Calu3 (cell line): ENCODE measurements at regions of chr12 and their contacts with region 1.

Region 1: DNA sequence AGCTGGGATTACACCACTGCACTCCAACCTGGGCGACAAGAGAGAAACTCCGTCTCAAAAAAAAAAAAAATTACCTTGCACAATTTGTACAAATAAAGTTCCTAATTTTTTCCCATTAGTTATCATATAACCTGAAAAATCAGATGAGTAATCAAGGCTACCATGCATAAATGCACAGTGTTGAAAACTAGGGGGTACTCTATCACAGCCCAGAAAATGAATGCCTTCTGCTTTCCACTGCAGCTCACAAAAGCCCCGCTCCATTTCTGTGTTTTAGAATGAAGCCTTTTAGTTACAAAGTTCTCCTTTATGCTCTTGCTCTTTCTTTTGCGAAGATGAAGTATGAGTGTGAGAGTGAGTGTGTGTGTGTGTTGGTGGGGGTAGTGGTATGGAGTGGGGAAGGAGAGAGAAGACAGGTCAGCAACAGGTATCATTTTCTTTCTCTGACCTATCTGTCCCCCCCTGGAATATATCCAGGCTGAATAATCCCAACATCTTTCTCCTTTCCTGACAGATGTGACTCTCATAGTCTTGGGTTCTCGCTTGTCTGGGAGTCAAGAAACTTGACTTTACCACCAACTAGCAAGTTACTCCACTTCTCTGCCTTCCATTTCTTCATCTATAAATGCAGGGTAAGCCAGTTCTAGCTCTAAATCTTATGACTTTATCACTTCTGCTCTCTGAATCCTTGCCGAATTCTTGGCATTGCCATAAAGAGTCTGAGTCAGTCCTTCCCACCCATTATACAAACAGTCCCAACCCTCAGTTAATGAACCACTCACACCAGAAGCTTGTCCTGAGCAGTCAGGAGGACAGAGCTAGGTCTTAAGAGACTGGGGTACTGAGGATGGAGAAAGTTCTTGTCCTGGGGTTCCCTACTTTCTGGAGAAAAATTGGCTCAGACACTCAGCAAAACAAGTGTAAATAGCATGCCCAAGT is 16.1 kb downstream of the BIN2 start:
- DNase-seq: peak; percentile 50
- H3K4me3 Mint-ChIP-seq: peak overlapping the region; percentile 44
- H3K27ac Mint-ChIP-seq: peak overlapping the region; percentile 97
- H3K4me1 Mint-ChIP-seq: peaks cover 16% of the 10 kb centered on the region
- H3K27me3 Mint-ChIP-seq: no peaks in the 10 kb centered on the region
- CTCF ChIP-seq: no peak

Region 2: GRCh38 chr12:51009056-51009440 is 298.9 kb before region 1 on chr12:
- CTCF ChIA-PET with region 1: no interaction called
- intact Hi-C with region 1: no loop called
- DNase-seq: no peak
- H3K4me3 Mint-ChIP-seq: no peak overlapping the region
- H3K27ac Mint-ChIP-seq: no peak overlapping the region
- H3K4me1 Mint-ChIP-seq: peaks cover 13% of the 10 kb centered on the region
- H3K27me3 Mint-ChIP-seq: no peaks in the 10 kb centered on the region
- CTCF ChIP-seq: no peak

Region 3: DNA sequence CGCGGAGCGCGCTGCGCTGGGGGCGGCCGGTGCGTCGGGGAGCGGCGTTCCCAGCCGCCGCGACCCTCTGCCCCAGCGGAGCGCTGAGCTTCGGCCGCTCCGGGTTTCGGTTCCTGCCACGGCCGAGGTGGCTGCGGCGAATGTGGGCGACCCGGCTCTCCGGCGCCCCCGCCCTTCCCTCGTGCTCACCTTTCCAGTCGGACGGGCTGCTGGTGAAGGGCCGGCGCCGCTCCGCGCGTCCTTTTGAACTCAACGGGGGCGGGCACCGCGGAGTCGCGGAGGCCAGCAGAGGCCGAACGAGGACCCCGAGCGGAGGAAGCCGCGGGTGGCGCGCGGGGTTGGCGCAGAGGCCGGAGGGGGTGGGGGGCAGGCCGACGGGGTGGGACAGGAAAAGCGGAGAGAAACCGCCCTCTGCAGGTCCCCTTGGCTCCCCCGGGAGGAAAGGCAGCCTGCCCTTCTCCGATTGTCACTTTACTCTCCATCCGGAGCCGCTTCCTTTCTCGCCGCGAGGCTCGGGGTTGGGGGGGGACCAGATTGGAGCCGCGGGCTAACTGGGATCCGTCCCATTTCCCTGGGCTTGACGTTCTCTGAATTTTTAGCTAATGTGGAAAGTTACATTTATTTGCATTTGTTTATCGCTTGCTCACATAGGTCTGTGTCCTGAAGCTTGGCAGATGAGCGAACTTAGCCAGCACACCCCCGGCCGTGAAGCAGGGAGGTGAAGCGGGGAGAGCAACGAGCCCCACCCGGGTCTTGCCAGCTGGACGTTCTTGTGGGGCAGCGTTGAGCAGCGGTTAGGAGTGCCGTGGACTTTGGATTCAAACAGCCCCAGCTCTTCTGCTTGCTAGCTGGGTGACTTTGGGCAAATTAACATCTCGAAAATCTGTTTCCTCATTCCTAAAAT is 37.6 kb before region 1 on chr12 and contains the start of gene SMAGP:
- CTCF ChIA-PET with region 1: interaction called, 11 read pairs
- intact Hi-C with region 1: loop called (anchors 5 kb)
- DNase-seq: peak; percentile 90
- H3K4me3 Mint-ChIP-seq: peak within 1 kb of the TSS; percentile 83
- H3K27ac Mint-ChIP-seq: peak within 1 kb of the TSS; percentile 95
- H3K4me1 Mint-ChIP-seq: peaks cover 24% of the 10 kb centered on the region
- H3K27me3 Mint-ChIP-seq: no peaks in the 10 kb centered on the region
- CTCF ChIP-seq: no peak
- total RNA-seq, gene SMAGP: 60.9 and 64.1 TPM in 2 replicates